ENCODE measurements at regions of chr1 and their contacts with region 1.

Region 1: DNA sequence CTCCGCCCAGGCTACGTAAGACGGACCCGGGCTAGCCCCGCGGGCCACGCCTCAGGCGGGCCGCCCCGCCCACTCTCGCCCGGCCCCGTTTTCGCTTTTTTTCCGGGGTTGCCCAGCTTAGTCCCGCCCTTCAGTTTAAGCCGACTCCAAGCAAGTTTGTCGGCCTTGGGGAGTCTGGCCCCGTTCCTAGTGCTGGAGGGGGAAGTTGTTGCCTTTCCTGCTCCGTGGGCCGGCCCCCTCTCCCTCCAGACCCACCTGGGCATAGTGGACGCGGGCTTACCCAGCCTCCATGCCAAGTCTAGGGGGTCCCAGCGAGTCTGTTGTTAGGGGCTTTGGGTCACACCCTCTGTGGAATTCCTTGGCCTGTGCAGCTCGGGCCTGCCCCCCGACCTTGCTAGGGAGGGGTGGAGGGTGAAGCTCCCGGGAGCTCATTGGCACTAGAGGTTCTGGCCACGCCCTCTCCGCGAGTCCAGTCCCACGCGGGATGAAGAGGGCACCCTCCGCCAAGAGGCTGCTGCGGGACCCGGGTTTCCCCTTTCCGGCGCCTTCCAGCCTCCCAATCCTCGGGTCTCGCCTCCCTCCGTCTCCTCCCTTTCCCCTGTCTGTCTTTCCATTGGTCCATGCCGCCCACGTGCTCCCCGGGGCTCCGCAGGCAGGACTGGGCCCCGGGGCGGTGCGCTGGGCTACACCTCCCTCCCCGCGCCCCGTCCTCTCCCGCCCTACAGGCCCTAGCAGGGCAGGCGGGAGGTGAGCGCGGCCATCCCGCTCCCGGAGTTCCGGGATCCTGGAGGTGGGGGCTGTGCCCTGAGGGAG is 3.3 kb downstream of the RUSC1 start:
- DNase-seq: peak; percentile 98
- ATAC-seq: peak; percentile 63
- H3K4me3 ChIP-seq: peak overlapping the region; percentile 80
- H3K27ac ChIP-seq: peak overlapping the region; percentile 83
- H3K4me1 ChIP-seq: peaks cover 21% of the 10 kb centered on the region
- H3K27me3 ChIP-seq: no peaks in the 10 kb centered on the region
- CTCF ChIP-seq: no peak

Region 2: GRCh38 chr1:155113450-155113990 is 210.5 kb before region 1 on chr1:
- CTCF ChIA-PET with region 1: no interaction called
- POLR2A ChIA-PET with region 1: no interaction called
- intact Hi-C with region 1: no loop called
- DNase-seq: no peak
- ATAC-seq: no peak
- H3K4me3 ChIP-seq: no peak overlapping the region
- H3K27ac ChIP-seq: no peak overlapping the region
- H3K4me1 ChIP-seq: 0 out of 2 replicates have a peak, but pooled peaks cover 4% of the 10 kb centered on the region
- H3K27me3 ChIP-seq: no peaks in the 10 kb centered on the region
- CTCF ChIP-seq: no peak

Region 3: DNA sequence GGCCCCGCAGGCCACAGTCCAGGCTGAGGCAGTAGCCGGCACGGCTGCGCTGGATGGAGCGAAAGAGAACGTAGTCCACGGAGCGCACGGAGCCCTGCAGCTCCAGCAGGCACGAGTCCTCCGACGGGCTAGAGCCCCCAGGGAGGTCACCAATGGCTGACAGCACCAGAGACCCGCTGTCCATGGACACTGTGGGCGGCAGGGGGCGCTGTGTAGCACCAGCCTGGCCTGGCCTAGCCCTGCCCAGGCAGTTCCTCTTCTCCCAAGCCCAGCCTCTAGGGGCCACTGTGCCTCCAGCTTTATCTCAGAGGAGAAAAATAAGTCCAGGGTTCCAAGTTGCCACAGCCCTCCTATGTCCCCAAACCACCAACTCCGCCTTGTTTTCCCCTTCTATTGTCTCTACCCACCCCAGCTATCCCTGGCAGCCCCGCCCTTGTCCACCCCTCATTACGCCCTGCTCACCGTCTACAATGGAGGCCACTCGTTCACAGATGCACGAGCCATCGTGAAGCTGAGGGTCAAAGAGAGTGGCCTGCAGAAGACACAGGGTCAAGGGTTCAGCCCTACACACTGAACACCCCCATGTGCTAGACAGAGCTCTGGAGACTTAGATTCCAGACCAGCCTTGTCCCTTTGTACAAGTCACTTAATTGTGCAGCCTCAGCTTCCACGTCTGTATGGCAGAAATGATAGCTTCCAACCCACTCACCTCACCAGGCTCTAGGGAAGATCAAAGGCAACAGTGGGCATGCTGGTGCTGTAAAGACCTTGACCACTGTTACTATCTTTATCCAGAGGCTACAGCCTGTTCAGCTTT is 73.2 kb before region 1 on chr1:
- CTCF ChIA-PET with region 1: interaction called, 14 read pairs
- POLR2A ChIA-PET with region 1: interaction called, 4 read pairs
- intact Hi-C with region 1: loop called (anchors 1 kb)
- DNase-seq: peak; percentile 97
- ATAC-seq: peak; percentile 66
- H3K4me3 ChIP-seq: no peak overlapping the region
- H3K27ac ChIP-seq: no peak overlapping the region
- H3K4me1 ChIP-seq: peaks cover 19% of the 10 kb centered on the region
- H3K27me3 ChIP-seq: no peaks in the 10 kb centered on the region
- CTCF ChIP-seq: peak; percentile 99

Region 4: GRCh38 chr1:155308493-155309422 is 15.2 kb before region 1 on chr1 and contains the start of gene FDPS:
- CTCF ChIA-PET with region 1: no interaction called
- POLR2A ChIA-PET with region 1: interaction called, 5 read pairs
- intact Hi-C with region 1: loop called (anchors 1 kb)
- DNase-seq: peak; percentile 100
- ATAC-seq: peak; percentile 97
- H3K4me3 ChIP-seq: peak within 1 kb of the TSS; percentile 92
- H3K27ac ChIP-seq: peak within 1 kb of the TSS; percentile 85
- H3K4me1 ChIP-seq: peaks cover 17% of the 10 kb centered on the region; the same call in 1 of the 2 replicates
- H3K27me3 ChIP-seq: no peaks in the 10 kb centered on the region
- CTCF ChIP-seq: no peak
- total RNA-seq, gene FDPS: 301 and 313 TPM in 2 replicates

Region 5: GRCh38 chr1:155392898-155393411 is 69.0 kb after region 1 on chr1:
- CTCF ChIA-PET with region 1: no interaction called
- POLR2A ChIA-PET with region 1: no interaction called
- intact Hi-C with region 1: no loop called
- DNase-seq: no peak
- ATAC-seq: peak; percentile 18; the same call in 1 of the 2 replicates
- H3K4me3 ChIP-seq: no peak overlapping the region
- H3K27ac ChIP-seq: no peak overlapping the region
- H3K4me1 ChIP-seq: no peaks in the 10 kb centered on the region
- H3K27me3 ChIP-seq: no peaks in the 10 kb centered on the region
- CTCF ChIP-seq: no peak

Region 6: GRCh38 chr1:155648551-155649147 is 324.6 kb after region 1 on chr1:
- CTCF ChIA-PET with region 1: no interaction called
- POLR2A ChIA-PET with region 1: interaction called, 4 read pairs
- intact Hi-C with region 1: loop called (anchors 1 kb)
- DNase-seq: peak; percentile 93
- ATAC-seq: peak; percentile 78
- H3K4me3 ChIP-seq: peak overlapping the region; percentile 62
- H3K27ac ChIP-seq: peak overlapping the region; percentile 77
- H3K4me1 ChIP-seq: peaks cover 33% of the 10 kb centered on the region
- H3K27me3 ChIP-seq: no peaks in the 10 kb centered on the region
- CTCF ChIP-seq: peak; percentile 80

Measured in PC-3 (cell line).